CD8-positive, alpha-beta T cell (primary cell): ENCODE measurements at regions of chr1 and their contacts with region 1.

Region 1: GRCh38 chr1:42173155-42173933 is 8.8 kb upstream of the GUCA2A start:
- DNase-seq: peak; percentile 38 to 84 (median 66)
- ATAC-seq: peak; percentile 92
- H3K4me3 ChIP-seq: no peak overlapping the region
- H3K4me3 Mint-ChIP-seq: no peak overlapping the region
- H3K27ac ChIP-seq: no peak overlapping the region
- H3K27ac Mint-ChIP-seq: no peak overlapping the region
- H3K4me1 ChIP-seq: peaks cover 4% of the 10 kb centered on the region
- H3K4me1 Mint-ChIP-seq: no peaks in the 10 kb centered on the region
- H3K27me3 ChIP-seq: no peaks in the 10 kb centered on the region
- H3K27me3 Mint-ChIP-seq: no peaks in the 10 kb centered on the region
- CTCF ChIP-seq: peak; percentile 97

Region 2: DNA sequence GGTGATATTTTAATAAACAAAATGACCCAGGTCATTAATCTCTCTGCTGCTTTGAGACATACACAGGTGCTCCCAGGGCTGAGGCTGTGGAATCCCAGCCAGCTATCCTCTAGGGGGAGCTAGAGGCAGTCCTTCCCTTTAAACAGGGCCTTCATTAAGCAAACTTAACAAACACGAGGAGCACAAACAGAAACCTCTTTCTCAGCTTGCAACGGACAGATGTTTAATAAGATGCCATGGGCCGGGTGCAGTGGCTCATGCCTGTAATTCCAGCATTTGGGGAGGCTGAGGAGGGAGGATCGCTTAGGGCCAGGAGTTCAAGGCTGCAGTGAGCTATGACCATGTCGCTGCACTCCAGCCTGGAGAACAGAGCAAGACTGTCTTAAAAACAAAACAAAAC is 361.3 kb before region 1 on chr1:
- CTCF ChIA-PET with region 1: interaction called, 8 read pairs
- POLR2A ChIA-PET with region 1: no interaction called
- intact Hi-C with region 1: loop called (anchors 1 to 5 kb)
- DNase-seq: peak in 8 of 9 experiments; percentile 25 to 71 (median 42)
- ATAC-seq: peak; percentile 62
- H3K4me3 ChIP-seq: no peak overlapping the region
- H3K4me3 Mint-ChIP-seq: no peak overlapping the region
- H3K27ac ChIP-seq: no peak overlapping the region
- H3K27ac Mint-ChIP-seq: no peak overlapping the region
- H3K4me1 ChIP-seq: peaks cover 16% of the 10 kb centered on the region
- H3K4me1 Mint-ChIP-seq: peaks cover 28% of the 10 kb centered on the region
- H3K27me3 ChIP-seq: no peaks in the 10 kb centered on the region
- H3K27me3 Mint-ChIP-seq: no peaks in the 10 kb centered on the region
- CTCF ChIP-seq: peak; percentile 58

Region 3: GRCh38 chr1:42146626-42147320 is 26.6 kb before region 1 on chr1:
- CTCF ChIA-PET with region 1: interaction called, 11 read pairs
- POLR2A ChIA-PET with region 1: no interaction called
- intact Hi-C with region 1: loop called in 1 of 2 experiments (anchors 1 kb)
- DNase-seq: peak; percentile 25 to 76 (median 66)
- ATAC-seq: peak; percentile 78
- H3K4me3 ChIP-seq: no peak overlapping the region
- H3K4me3 Mint-ChIP-seq: no peak overlapping the region
- H3K27ac ChIP-seq: no peak overlapping the region
- H3K27ac Mint-ChIP-seq: no peak overlapping the region
- H3K4me1 ChIP-seq: no peaks in the 10 kb centered on the region
- H3K4me1 Mint-ChIP-seq: peaks cover 6% of the 10 kb centered on the region
- H3K27me3 ChIP-seq: peaks cover 0 to 8% of the 10 kb centered on the region in 2 experiments
- H3K27me3 Mint-ChIP-seq: peaks cover 21% of the 10 kb centered on the region
- CTCF ChIP-seq: peak; percentile 73

Region 4: GRCh38 chr1:42186152-42186551 is 12.8 kb after region 1 on chr1:
- CTCF ChIA-PET with region 1: interaction called, 13 read pairs
- POLR2A ChIA-PET with region 1: no interaction called
- intact Hi-C with region 1: no loop called
- DNase-seq: no peak
- ATAC-seq: no peak
- H3K4me3 ChIP-seq: no peak overlapping the region
- H3K4me3 Mint-ChIP-seq: no peak overlapping the region
- H3K27ac ChIP-seq: no peak overlapping the region
- H3K27ac Mint-ChIP-seq: peak overlapping the region; percentile 33
- H3K4me1 ChIP-seq: no peaks in the 10 kb centered on the region
- H3K4me1 Mint-ChIP-seq: peaks cover 4% of the 10 kb centered on the region
- H3K27me3 ChIP-seq: no peaks in the 10 kb centered on the region
- H3K27me3 Mint-ChIP-seq: no peaks in the 10 kb centered on the region
- CTCF ChIP-seq: no peak

Region 5: DNA sequence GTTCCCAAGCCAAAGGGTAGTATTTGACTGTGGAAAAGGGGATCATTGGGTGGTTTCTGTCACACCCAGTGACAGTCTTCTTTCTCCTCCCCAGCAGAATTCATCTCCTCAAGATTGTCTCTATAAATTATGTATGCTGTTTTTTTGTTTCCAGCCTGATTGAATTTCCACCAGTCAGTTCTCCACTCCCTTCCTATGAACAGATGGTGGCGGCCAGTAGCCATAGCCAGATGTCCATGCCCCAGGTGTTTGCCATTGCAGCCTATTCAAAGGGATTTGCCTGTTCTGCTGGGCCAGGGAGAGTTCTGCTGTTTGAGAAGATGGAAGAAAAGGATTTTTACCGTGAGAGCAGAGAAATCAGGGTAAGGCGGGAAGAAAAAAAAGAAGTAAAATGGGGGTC is 1011.7 kb after region 1 on chr1:
- CTCF ChIA-PET with region 1: no interaction called
- POLR2A ChIA-PET with region 1: no interaction called
- intact Hi-C with region 1: no loop called
- DNase-seq: no peak
- ATAC-seq: no peak
- H3K4me3 ChIP-seq: no peak overlapping the region
- H3K4me3 Mint-ChIP-seq: no peak overlapping the region
- H3K27ac ChIP-seq: no peak overlapping the region
- H3K27ac Mint-ChIP-seq: no peak overlapping the region
- H3K4me1 ChIP-seq: no peaks in the 10 kb centered on the region
- H3K4me1 Mint-ChIP-seq: no peaks in the 10 kb centered on the region
- H3K27me3 ChIP-seq: no peaks in the 10 kb centered on the region
- H3K27me3 Mint-ChIP-seq: peaks cover 16% of the 10 kb centered on the region
- CTCF ChIP-seq: no peak